Left lung (tissue), 14 donors: ENCODE measurements at regions of chr17 and their contacts with region 1.

Region 1: GRCh38 chr17:50547035-50547735 is at the start of gene SPATA20:
- DNase-seq: peak; percentile 83 to 98 (median 93)
- ATAC-seq: peak; percentile 83
- H3K4me3 ChIP-seq: peak within 1 kb of the TSS; percentile 53 to 54
- H3K27ac ChIP-seq: peak within 1 kb of the TSS; percentile 70 to 72
- H3K4me1 ChIP-seq: peaks cover 14 to 30% of the 10 kb centered on the region in 2 donors
- H3K27me3 ChIP-seq: no peaks in the 10 kb centered on the region
- CTCF ChIP-seq: peak; percentile 96 to 99
- polyA plus RNA-seq, gene SPATA20: 41.1 to 60.5 (median 47.7) TPM

Region 2: GRCh38 chr17:50604513-50604912 is 57.3 kb after region 1 on chr17:
- intact Hi-C with region 1: no loop called
- DNase-seq: peak in 3 of 4 donors; percentile 61 to 98 (median 96)
- ATAC-seq: peak; percentile 70
- H3K4me3 ChIP-seq: no peak overlapping the region
- H3K27ac ChIP-seq: no peak overlapping the region
- H3K4me1 ChIP-seq: peaks cover 0 to 9% of the 10 kb centered on the region in 2 donors
- H3K27me3 ChIP-seq: peaks cover 0 to 26% of the 10 kb centered on the region in 2 donors
- CTCF ChIP-seq: no peak

Region 3: GRCh38 chr17:50620858-50621257 is 73.7 kb after region 1 on chr17:
- intact Hi-C with region 1: loop called in 1 of 2 experiments (anchors 5 kb)
- DNase-seq: peak in 1 of 4 donors; percentile 75
- ATAC-seq: no peak
- H3K4me3 ChIP-seq: no peak overlapping the region
- H3K27ac ChIP-seq: no peak overlapping the region
- H3K4me1 ChIP-seq: peaks cover 0 to 10% of the 10 kb centered on the region in 2 donors
- H3K27me3 ChIP-seq: peaks cover 0 to 31% of the 10 kb centered on the region in 2 donors
- CTCF ChIP-seq: no peak

Region 4: DNA sequence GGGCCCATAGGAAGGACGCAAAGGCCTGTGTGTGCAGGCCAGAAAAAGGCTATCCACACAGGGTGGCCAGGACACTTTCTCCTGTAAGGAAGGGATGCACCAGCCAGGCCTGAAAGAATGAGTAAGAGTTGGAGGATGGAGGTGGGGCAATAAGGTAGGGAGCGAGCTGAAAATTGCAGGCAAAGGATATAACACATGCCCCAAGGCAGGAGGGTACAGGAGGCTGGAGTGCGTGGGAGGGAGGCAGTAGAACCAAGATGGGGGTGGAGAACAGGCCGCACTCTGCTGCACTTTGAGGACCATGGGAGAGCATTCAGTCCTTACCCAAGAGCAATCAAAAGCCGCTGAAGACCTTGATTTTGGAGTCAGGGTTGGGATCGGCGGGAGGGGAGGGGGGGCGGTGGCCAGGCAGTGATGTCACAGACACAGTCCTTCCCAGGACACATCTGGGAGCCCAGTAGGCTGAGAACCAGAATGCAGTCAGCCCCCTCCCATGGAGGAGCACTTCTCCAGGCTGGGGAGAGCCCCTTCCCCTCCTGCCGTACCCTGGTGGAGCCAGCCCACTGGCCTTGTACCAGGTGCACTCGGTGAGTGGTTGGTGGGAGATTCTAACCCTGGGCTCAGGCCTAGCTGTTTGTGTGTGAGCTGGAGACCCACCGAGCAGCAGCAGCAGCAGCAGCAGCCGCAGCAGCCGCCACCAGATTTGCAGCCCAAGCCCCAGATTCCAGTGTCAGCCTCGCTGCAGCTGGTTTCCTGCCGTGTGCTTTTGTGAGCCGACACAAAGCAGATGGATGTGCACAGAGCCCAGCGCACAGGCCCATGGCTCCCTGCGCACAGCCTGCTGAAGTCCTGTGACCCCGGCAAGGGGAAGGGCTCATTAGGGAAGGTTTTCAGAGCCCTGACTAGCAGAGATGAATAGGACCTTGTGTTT is 143.0 kb after region 1 on chr17:
- intact Hi-C with region 1: loop called in 1 of 2 experiments (anchors 5 kb)
- DNase-seq: no peak
- ATAC-seq: no peak
- H3K4me3 ChIP-seq: no peak overlapping the region
- H3K27ac ChIP-seq: no peak overlapping the region
- H3K4me1 ChIP-seq: peaks cover 17 to 54% of the 10 kb centered on the region in 2 donors
- H3K27me3 ChIP-seq: peaks cover 0 to 7% of the 10 kb centered on the region in 2 donors
- CTCF ChIP-seq: no peak